Vagina (tissue), 2 donors: ENCODE measurements at regions of chr4 and their contacts with region 1.

Region 1: DNA sequence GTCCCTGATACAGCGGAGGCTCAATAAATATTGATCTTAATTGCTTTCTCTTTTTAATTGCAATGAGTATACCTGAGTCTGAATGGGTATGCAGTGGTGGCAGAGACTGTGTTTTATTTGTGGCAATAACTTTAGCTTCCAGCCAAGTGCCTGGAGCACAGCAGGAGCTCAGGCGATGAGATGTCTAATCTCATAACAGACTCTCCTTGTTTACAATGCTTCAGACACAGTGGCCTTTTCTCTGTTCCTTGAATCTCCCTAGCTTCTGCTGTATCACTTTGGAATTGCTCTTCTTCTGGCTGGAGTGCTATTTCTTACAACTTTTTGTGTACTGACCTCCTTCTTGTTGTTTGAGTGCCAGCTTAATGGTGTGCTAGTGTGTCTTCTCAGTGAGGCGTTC is 91.5 kb upstream of the UNC5C start:
- DNase-seq: no peak
- H3K4me3 ChIP-seq: no peak overlapping the region
- H3K27ac ChIP-seq: no peak overlapping the region
- H3K4me1 ChIP-seq: no peaks in the 10 kb centered on the region
- H3K27me3 ChIP-seq: no peaks in the 10 kb centered on the region
- CTCF ChIP-seq: no peak
- POLR2A ChIP-seq: no peak

Region 2: DNA sequence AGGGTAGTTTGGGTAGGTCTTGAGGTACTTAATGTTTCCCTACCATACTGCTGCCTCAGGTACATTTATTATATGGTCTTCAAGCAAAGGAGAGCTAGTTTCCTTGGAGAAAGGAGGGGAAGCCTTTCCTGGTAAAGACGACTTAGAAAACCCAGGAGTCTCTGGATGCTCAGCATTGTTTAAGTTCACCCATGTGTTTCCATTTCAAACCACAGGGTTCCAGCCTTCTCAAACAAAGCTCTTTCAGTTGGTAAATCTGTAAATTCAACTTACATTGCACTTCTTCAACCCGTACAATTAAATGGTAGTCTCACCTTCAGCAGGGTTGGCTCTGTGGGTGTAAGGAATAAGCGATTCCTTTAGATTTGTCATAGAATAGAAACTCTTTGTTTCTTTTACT is 20.4 kb after region 1 on chr4:
- intact Hi-C with region 1: no loop called
- DNase-seq: no peak
- H3K4me3 ChIP-seq: no peak overlapping the region
- H3K27ac ChIP-seq: no peak overlapping the region
- H3K4me1 ChIP-seq: no peaks in the 10 kb centered on the region
- H3K27me3 ChIP-seq: no peaks in the 10 kb centered on the region
- CTCF ChIP-seq: no peak
- POLR2A ChIP-seq: no peak

Region 3: GRCh38 chr4:95889662-95890061 is 249.4 kb after region 1 on chr4:
- intact Hi-C with region 1: loop called (anchors 5 kb)
- DNase-seq: no peak
- H3K4me3 ChIP-seq: no peak overlapping the region
- H3K27ac ChIP-seq: no peak overlapping the region
- H3K4me1 ChIP-seq: no peaks in the 10 kb centered on the region
- H3K27me3 ChIP-seq: no peaks in the 10 kb centered on the region
- CTCF ChIP-seq: no peak
- POLR2A ChIP-seq: no peak

Region 4: GRCh38 chr4:95921470-95921869 is 281.2 kb after region 1 on chr4:
- intact Hi-C with region 1: no loop called
- DNase-seq: no peak
- H3K4me3 ChIP-seq: no peak overlapping the region
- H3K27ac ChIP-seq: no peak overlapping the region
- H3K4me1 ChIP-seq: no peaks in the 10 kb centered on the region
- H3K27me3 ChIP-seq: no peaks in the 10 kb centered on the region
- CTCF ChIP-seq: no peak
- POLR2A ChIP-seq: no peak